ENCODE measurements at regions of chr17 and their contacts with region 1.

Region 1: GRCh38 chr17:76659928-76660614 is 16.5 kb upstream of the ST6GALNAC1 start:
- DNase-seq: no peak
- H3K4me3 ChIP-seq: no peak overlapping the region
- H3K27ac ChIP-seq: no peak overlapping the region
- H3K4me1 ChIP-seq: peaks cover 8% of the 10 kb centered on the region
- CTCF ChIP-seq: no peak

Region 2: DNA sequence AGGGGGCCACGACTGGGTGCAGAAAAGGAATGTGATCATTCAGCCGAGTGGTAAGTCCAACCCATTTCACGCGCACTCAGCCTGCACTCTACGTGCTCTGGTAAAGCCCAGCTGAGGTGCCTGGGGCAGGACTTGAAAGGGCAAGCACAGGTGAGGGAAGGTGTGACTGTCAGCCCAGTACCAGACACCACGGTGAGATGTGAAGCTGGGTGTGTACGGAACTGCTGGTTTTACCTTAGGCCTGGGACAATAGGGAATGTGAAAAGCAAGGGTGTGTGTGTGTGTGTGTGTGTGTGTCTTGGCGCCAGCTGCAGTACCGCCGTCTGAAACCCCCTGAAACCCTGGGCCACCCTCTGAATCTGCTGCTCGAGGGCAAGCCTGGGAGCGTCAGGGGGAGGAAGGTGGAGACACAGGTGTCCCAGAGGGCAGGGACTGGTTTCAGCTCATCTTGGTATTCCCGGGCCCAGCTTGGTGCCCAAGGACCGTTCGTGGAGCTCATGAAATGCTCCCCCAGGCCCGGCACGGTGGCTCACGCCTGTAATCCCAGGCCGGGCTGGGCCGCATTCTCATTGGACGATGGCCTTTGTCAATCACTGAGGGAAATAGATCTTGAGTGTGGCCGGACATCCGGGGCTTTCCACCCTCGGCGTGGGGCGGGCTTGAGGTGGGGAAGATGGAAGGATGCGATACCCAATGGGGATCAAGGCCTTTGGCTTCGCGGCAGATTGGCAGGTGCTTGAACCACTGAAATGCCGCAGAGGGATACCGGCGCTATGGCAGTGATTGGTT is 11.2 kb after region 1 on chr17:
- CTCF ChIA-PET with region 1: no interaction called
- POLR2A ChIA-PET with region 1: interaction called, 19 read pairs
- intact Hi-C with region 1: no loop called
- DNase-seq: peak; percentile 100
- H3K4me3 ChIP-seq: peak overlapping the region; percentile 77
- H3K27ac ChIP-seq: peak overlapping the region; percentile 71
- H3K4me1 ChIP-seq: peaks cover 25% of the 10 kb centered on the region
- CTCF ChIP-seq: no peak

Region 3: GRCh38 chr17:76826330-76827068 is 166.4 kb after region 1 on chr17:
- CTCF ChIA-PET with region 1: no interaction called
- POLR2A ChIA-PET with region 1: no interaction called
- intact Hi-C with region 1: no loop called
- DNase-seq: no peak
- H3K4me3 ChIP-seq: no peak overlapping the region
- H3K27ac ChIP-seq: no peak overlapping the region
- H3K4me1 ChIP-seq: peaks cover 12% of the 10 kb centered on the region
- CTCF ChIP-seq: no peak